Ovary (tissue), 10 donors: ENCODE measurements at regions of chr1 and their contacts with region 1.

Region 1: DNA sequence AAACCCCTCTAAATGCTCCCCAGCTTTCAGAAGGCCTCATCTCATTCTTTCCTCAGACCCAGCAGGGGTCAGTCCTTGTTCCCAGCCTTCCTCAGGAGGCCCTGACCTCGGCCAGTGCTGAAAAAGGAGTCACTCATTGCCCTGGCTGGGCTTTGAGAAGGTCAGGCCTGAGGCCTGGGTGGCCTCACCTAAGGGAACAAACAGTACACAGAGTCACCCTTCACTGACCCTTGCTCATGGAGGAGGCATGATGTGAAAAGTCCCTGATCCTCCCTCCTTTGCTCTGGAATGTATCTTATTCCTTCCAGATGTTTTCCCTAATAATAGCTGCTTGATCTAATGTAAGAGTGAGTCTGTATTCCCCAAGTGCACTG is 117.7 kb upstream of the SLC44A3 start:
- DNase-seq: peak; percentile 55 to 88 (median 67)
- H3K4me3 ChIP-seq: no peak overlapping the region
- H3K27ac ChIP-seq: peak overlapping the region in 1 of 2 donors; percentile 81
- H3K4me1 ChIP-seq: peaks cover 6% of the 10 kb centered on the region
- H3K27me3 ChIP-seq: no peaks in the 10 kb centered on the region
- CTCF ChIP-seq: no peak
- EP300 ChIP-seq: no peak
- POLR2A ChIP-seq: no peak

Region 2: DNA sequence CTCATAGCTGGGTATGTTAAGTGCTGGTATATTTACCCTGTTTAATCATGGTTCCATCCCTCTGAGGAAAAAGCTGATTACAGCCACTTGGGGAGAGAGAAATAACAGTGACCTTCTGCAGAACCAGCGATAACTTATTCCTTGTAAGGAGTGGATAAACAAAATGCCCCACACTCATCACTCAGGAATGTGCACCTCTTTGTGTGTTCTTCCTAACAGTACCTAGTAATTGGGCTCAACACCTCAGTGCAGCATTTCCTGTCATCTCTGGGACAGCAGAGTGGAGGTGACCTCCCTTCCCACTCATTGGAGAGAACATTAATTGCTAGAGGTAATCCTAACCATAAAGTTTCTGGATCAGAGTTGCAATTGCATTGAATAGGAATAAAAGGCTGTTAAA is 48.4 kb before region 1 on chr1:
- intact Hi-C with region 1: loop called in 1 of 4 experiments (anchors 10 kb)
- DNase-seq: no peak
- H3K4me3 ChIP-seq: no peak overlapping the region
- H3K27ac ChIP-seq: peak overlapping the region in 1 of 2 donors; percentile 34
- H3K4me1 ChIP-seq: peaks cover 14% of the 10 kb centered on the region
- H3K27me3 ChIP-seq: no peaks in the 10 kb centered on the region
- CTCF ChIP-seq: no peak
- EP300 ChIP-seq: no peak
- POLR2A ChIP-seq: no peak

Region 3: GRCh38 chr1:94792473-94793295 is 90.3 kb after region 1 on chr1:
- intact Hi-C with region 1: loop called in 1 of 4 experiments (anchors 10 kb)
- DNase-seq: no peak
- H3K4me3 ChIP-seq: no peak overlapping the region
- H3K27ac ChIP-seq: peak overlapping the region in 1 of 2 donors; percentile 63
- H3K4me1 ChIP-seq: peaks cover 11% of the 10 kb centered on the region
- H3K27me3 ChIP-seq: no peaks in the 10 kb centered on the region
- CTCF ChIP-seq: peak in 2 of 3 donors; percentile 9 to 30
- EP300 ChIP-seq: no peak
- POLR2A ChIP-seq: no peak